GM10248 (cell line): ENCODE measurements at regions of chr20 and their contacts with region 1.

Region 1: DNA sequence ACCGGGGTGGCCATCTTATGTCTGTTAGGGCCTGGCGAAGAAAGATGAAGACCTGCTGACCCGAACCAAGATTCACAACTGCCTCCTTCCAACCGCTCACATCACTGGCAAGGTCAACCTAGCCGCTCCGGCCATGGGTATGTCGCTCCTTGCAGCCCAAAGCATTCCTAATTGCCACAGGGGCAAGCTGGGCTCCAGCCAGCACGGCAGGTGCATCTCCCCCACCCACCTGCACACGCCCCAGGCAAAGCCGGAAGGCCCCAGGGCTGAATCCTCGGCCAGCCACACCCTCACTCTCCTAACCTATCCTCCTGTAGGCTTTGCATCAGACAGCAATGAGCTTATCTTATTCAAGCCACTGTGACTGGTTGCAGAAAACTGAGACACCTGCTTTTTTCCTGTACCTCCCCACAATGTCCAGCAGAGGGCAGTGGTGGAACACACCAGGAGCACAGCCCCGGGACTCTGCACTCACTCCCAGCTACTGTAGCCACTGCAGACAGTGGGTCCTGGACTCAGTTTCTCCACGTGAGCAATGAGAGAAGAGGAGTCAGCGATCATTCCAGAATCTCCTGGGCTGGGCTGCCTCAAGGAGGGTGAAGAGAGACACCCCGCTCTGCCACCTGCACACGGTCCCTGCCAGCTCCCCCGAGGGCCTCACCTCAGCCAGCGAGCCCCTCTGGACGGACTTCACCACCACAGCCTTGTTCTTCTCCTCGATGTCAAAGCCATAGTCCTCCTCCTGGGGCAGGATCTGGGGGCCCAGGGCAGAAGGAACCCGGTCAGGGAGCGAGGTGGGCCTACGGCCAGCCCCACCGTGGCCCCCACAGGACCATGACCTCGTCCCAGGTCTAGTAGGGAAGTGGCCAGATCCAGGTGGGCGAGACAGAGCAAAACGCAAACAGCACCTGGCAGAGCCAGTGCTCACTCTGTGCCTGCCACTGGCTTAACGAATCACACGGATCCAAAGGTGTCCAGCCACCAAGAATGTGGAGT is 170.0 kb downstream of the PREX1 start:
- DNase-seq: peak; percentile 89
- CTCF ChIP-seq: peak; percentile 92

Region 2: GRCh38 chr20:48668451-48668952 is 10.7 kb after region 1 on chr20:
- CTCF ChIA-PET with region 1: interaction called, 32 read pairs
- POLR2A ChIA-PET with region 1: no interaction called
- DNase-seq: no peak
- CTCF ChIP-seq: no peak

Region 3: DNA sequence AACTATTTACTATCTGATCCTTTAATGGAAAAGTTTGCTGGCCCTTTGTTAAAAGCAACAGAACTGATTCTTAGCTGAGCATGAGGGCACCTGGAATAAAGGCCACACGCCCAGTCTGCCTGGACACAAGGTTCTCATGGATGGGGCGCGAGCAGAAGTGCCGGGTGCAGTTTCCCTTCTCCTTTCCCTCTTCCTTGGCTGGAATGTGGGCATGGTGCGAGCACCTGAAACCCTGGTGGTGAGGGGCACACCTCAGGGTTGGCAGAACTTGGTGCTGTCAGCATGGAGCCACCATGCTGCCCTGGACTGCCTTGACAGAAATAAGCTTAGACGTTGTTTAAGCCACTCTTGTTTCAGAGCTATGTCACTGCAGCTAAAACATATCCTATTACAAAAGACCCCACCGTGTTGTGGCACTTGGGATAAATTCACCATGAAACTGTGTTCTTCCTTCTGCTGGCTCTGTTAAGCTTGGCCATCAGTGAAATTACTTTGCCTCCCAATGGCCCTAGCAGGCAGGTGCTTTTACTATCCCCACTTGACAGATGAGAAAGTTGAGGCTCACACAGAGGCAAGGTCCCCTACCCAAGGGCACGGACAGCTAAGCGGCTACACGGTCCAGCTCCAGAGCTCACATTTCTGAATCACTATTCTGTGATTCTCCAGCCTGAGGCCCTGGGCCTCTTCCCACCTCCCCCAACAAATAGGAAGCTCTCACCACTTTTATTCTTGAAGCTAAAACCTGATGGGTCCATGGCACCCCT is 54.1 kb after region 1 on chr20:
- CTCF ChIA-PET with region 1: interaction called, 15 read pairs
- POLR2A ChIA-PET with region 1: no interaction called
- DNase-seq: no peak
- CTCF ChIP-seq: no peak

Region 4: GRCh38 chr20:48818407-48818987 is 160.7 kb after region 1 on chr20:
- CTCF ChIA-PET with region 1: interaction called, 17 read pairs
- POLR2A ChIA-PET with region 1: no interaction called
- DNase-seq: peak; percentile 50
- CTCF ChIP-seq: no peak

Region 5: DNA sequence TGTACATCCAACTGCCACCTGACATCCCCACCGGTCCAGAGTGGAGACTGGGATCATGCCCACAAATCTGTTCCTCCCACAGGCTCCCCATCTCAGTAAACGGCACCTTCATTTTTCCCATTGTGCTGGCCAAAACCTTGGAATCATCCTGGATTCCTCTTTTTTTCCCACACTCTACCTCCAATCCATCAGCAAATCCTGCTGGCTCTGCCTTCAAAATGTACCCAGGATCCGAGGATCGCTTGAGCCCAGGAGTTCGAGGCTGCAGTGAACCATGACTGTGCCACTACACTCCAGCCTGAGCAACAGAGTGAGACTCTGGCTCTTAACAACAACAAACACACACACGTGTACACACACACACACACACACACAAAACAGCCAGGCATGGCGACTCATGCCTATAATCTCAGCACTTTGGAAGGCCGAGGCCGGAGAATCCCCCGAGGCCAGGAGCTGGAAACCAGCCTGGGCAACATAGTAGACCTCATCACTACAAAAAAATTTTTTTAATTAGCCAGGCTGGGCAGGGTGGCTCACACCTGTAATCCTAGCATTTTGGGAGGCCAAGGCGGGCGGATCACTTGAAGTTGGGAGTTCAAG is 240.3 kb after region 1 on chr20:
- CTCF ChIA-PET with region 1: interaction called, 153 read pairs
- POLR2A ChIA-PET with region 1: no interaction called
- DNase-seq: no peak
- CTCF ChIP-seq: no peak

Region 6: GRCh38 chr20:48921151-48921898 is 263.6 kb after region 1 on chr20 and contains the start of gene ARFGEF2:
- CTCF ChIA-PET with region 1: interaction called, 12 read pairs
- POLR2A ChIA-PET with region 1: interaction called, 3 read pairs
- DNase-seq: peak; percentile 98
- CTCF ChIP-seq: no peak

Region 7: DNA sequence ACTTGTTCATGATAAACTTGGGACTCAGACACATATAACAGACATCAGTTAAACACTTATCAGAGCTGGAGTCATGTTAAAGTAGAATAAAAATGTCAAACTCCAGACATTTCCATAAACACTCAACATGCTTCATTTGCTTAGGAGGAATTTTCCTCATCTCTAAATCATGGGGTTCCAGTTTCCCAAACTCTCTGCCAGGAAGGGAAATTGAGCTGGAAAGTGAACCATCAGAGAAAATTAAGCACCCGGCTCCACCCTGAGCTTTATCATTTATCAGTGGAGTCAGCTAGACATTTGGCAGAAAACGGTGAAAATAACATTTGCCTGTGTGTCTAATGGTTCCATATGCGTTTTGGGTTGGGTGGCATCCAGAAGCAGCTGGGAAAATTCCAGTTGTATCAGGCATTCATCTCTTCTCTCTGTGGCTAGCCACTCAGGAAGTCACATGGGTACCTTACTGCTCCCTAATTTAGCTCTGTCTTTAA is 645.3 kb after region 1 on chr20:
- CTCF ChIA-PET with region 1: no interaction called
- POLR2A ChIA-PET with region 1: no interaction called
- DNase-seq: no peak
- CTCF ChIP-seq: no peak